ENCODE measurements at regions of chr17 and their contacts with region 1.

Region 1: DNA sequence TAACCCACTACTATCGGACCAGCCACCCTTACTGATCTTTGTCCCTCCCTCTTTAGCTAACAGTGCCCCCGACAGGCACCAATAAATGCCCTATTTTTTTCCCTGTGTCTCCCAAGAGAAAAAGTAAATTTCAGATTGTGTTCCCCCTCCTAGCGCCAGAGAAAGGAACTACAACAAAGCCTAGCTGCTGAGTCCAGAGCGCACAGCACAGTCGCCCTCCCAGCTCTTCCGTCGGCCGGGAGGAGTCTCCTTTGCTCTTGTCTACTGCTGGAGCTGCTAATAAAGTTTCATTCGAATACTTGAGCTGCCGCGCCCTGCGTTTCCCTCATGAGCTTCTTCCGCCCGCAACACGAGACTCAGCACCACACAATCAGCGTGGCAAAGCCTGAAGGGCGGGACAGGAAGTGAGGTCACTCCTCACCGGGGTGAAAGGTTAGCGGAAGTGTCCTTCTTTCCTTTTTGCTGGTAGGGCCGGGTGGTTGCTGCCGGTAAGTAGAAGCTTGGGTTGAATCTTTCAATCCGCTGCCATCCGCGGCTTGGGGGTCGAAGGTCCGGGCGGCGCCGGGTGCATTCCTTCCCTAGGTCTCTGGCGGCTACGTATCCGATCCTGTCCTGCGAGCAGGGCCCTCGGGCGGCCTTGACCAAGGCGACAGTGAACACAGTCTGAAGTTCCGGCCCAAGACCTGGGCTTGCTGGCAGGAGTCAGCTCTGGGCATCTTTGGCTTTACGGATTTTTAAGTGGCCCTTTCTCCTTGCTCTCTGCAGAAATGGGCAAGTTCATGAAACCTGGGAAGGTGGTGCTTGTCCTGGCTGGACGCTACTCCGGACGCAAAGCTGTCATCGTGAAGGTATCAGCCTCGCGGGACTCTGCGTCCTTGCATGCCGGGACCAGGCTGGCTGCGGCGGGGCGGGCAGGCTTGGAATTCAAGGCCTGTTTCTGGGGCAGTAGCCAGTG is at the start of gene RPL27:
- DNase-seq: peak; percentile 99
- H3K4me3 Mint-ChIP-seq: peak within 1 kb of the TSS; percentile 89
- H3K27ac Mint-ChIP-seq: peak within 1 kb of the TSS; percentile 99
- H3K4me1 Mint-ChIP-seq: peaks cover 35% of the 10 kb centered on the region
- H3K27me3 Mint-ChIP-seq: no peaks in the 10 kb centered on the region
- total RNA-seq, gene RPL27: 1,014 to 1,124 TPM

Region 2: GRCh38 chr17:42980398-42981397 is 17.6 kb before region 1 on chr17 and contains the start of gene RUNDC1:
- CTCF ChIA-PET with region 1: interaction called, 13 read pairs
- POLR2A ChIA-PET with region 1: interaction called, 3 read pairs
- DNase-seq: peak; percentile 92
- H3K4me3 Mint-ChIP-seq: peak within 1 kb of the TSS; percentile 92
- H3K27ac Mint-ChIP-seq: peak within 1 kb of the TSS; percentile 92
- H3K4me1 Mint-ChIP-seq: peaks cover 40% of the 10 kb centered on the region
- H3K27me3 Mint-ChIP-seq: no peaks in the 10 kb centered on the region
- total RNA-seq, gene RUNDC1: 13.0 to 14.0 TPM